ENCODE measurements at regions of chr1 and their contacts with region 1.

Region 1: GRCh38 chr1:52842643-52843309 is at the start of gene ZYG11A:
- DNase-seq: no peak
- ATAC-seq: peak; percentile 94
- H3K4me3 ChIP-seq: peak within 1 kb of the TSS; percentile 78
- H3K27ac ChIP-seq: peak within 1 kb of the TSS; percentile 73
- H3K4me1 ChIP-seq: no peaks in the 10 kb centered on the region
- H3K27me3 ChIP-seq: no peaks in the 10 kb centered on the region
- CTCF ChIP-seq: peak; percentile 17 to 55 (median 29); a peak in 3 of 6 replicates
- EP300 ChIP-seq: no peak
- POLR2A ChIP-seq: peak; percentile 55; the same call in 1 of the 2 replicates
- RAD21 ChIP-seq: peak; percentile 20; the same call in 1 of the 2 replicates
- polyA plus RNA-seq, gene ZYG11A: 0.22 to 0.26 TPM

Region 2: GRCh38 chr1:52210044-52210443 is 632.7 kb before region 1 on chr1:
- CTCF ChIA-PET with region 1: no interaction called
- POLR2A ChIA-PET with region 1: no interaction called
- RAD21 ChIA-PET with region 1: no interaction called
- SMC1A ChIA-PET with region 1: no interaction called
- in situ Hi-C with region 1: no loop called
- intact Hi-C with region 1: no loop called
- DNase-seq: no peak
- ATAC-seq: no peak
- H3K4me3 ChIP-seq: no peak overlapping the region
- H3K27ac ChIP-seq: no peak overlapping the region
- H3K4me1 ChIP-seq: no peaks in the 10 kb centered on the region
- H3K27me3 ChIP-seq: no peaks in the 10 kb centered on the region
- CTCF ChIP-seq: no peak
- EP300 ChIP-seq: no peak
- POLR2A ChIP-seq: no peak
- RAD21 ChIP-seq: no peak

Region 3: DNA sequence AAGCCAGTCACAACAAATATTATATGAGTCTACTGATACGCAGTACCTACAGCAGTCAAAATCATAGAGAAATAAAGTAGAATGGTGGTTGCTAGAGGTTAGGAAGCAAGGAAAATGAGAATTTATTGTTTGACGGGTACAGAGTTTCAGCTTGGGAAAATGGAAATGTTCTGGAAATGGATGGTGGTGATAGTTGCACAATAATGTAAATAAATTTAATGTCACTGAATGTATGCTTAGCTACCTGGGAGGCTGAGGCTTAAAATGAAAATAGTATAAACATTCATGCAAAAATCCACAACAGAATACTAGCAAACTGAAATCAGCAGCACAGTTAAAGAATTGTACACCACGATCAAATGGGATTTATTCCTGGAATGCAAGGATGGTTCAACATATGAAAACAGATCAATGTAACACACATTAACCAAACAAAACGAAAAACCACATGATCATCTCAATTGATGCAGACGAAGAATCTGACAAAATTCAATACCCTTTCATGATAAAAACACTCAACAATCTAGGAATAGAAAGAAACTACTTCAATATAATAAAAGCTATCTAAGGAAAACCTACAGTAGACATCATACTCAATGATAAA is 300.6 kb before region 1 on chr1:
- CTCF ChIA-PET with region 1: no interaction called
- POLR2A ChIA-PET with region 1: no interaction called
- RAD21 ChIA-PET with region 1: no interaction called
- SMC1A ChIA-PET with region 1: no interaction called
- in situ Hi-C with region 1: no loop called
- intact Hi-C with region 1: loop called (anchors 10 kb)
- DNase-seq: no peak
- ATAC-seq: no peak
- H3K4me3 ChIP-seq: no peak overlapping the region
- H3K27ac ChIP-seq: no peak overlapping the region
- H3K4me1 ChIP-seq: no peaks in the 10 kb centered on the region
- H3K27me3 ChIP-seq: no peaks in the 10 kb centered on the region
- CTCF ChIP-seq: no peak
- EP300 ChIP-seq: no peak
- POLR2A ChIP-seq: no peak
- RAD21 ChIP-seq: no peak

Region 4: DNA sequence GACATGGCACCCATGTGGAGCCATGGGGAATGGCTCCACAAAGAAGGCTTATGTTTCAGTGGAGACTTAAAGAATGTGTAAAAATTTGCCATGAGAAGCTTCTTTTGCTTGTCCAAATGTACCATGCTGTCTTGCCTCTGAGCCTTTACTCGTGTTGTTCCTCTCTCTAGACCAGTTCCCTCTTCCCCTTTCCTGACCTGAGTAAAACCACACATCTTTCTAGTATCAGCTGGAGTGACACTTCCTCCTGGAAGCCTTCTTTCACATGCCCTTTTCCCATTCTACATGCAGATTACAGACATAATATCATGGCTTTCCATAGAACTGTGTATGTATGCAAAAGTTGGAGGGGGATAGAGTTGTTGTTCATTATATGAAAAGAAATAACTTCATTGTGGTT is 254.2 kb before region 1 on chr1:
- CTCF ChIA-PET with region 1: no interaction called
- POLR2A ChIA-PET with region 1: no interaction called
- RAD21 ChIA-PET with region 1: no interaction called
- SMC1A ChIA-PET with region 1: no interaction called
- in situ Hi-C with region 1: no loop called
- intact Hi-C with region 1: no loop called
- DNase-seq: no peak
- ATAC-seq: no peak
- H3K4me3 ChIP-seq: no peak overlapping the region
- H3K27ac ChIP-seq: no peak overlapping the region
- H3K4me1 ChIP-seq: no peaks in the 10 kb centered on the region; the same call in 1 of the 2 replicates
- H3K27me3 ChIP-seq: no peaks in the 10 kb centered on the region
- CTCF ChIP-seq: no peak
- EP300 ChIP-seq: no peak
- POLR2A ChIP-seq: no peak
- RAD21 ChIP-seq: no peak

Region 5: DNA sequence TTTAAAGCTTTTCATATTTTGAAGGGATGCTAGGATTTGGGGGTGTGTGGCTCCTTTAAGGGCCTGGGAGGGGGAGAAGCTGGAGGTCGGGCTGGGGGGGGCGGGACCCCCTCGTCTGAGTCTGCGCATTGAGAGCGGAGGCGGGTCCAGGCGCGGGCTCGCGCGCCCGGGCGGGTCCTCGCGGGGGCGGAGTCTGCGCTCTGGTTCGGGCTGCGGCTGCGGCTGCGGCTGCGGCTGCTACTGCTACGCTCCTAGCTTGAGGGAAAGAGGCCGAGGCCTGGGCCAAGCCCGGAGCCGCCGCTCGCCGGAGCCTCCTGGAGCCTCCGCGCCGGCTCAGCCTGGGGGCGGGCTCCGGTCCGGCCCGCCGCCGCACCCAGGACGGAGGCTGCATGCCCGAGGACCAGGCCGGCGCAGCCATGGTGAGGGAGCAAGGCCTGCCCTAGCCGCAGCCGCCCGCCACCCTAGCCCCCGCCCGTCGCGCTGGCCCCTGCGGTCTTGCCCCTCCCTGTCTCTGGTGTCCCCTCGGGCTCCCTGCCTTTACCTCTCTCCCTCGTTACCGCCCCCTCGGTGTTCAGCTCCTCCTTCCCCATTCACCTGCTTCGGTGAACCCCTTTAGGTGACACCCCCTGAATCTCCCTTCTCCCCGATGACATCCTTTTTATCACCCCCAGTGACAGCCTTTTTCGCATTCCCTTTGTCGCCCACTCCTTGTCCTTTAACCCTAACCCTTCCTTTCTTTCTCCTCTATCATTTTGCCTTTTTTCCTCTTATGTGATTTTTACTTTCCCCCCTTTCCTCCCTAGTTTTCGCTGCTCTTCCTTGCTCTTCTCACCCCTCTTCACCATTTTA is 116.3 kb before region 1 on chr1 and contains the start of gene ZYG11B:
- CTCF ChIA-PET with region 1: interaction called, 3 read pairs
- POLR2A ChIA-PET with region 1: interaction called, 4 read pairs
- RAD21 ChIA-PET with region 1: interaction called, 12 read pairs
- SMC1A ChIA-PET with region 1: no interaction called
- in situ Hi-C with region 1: no loop called
- intact Hi-C with region 1: no loop called
- DNase-seq: peak; percentile 24
- ATAC-seq: peak; percentile 97
- H3K4me3 ChIP-seq: peak within 1 kb of the TSS; percentile 94
- H3K27ac ChIP-seq: peak within 1 kb of the TSS; percentile 51
- H3K4me1 ChIP-seq: no peaks in the 10 kb centered on the region; the same call in 1 of the 2 replicates
- H3K27me3 ChIP-seq: no peaks in the 10 kb centered on the region
- CTCF ChIP-seq: no peak
- EP300 ChIP-seq: no peak
- POLR2A ChIP-seq: peak; percentile 69
- RAD21 ChIP-seq: no peak
- polyA plus RNA-seq, gene ZYG11B: 1.8 to 2.6 TPM

Region 6: GRCh38 chr1:52792036-52792435 is 50.7 kb before region 1 on chr1:
- CTCF ChIA-PET with region 1: no interaction called
- POLR2A ChIA-PET with region 1: no interaction called
- RAD21 ChIA-PET with region 1: no interaction called
- SMC1A ChIA-PET with region 1: no interaction called
- in situ Hi-C with region 1: no loop called
- intact Hi-C with region 1: no loop called
- DNase-seq: no peak
- ATAC-seq: no peak
- H3K4me3 ChIP-seq: no peak overlapping the region
- H3K27ac ChIP-seq: no peak overlapping the region
- H3K4me1 ChIP-seq: no peaks in the 10 kb centered on the region
- H3K27me3 ChIP-seq: no peaks in the 10 kb centered on the region
- CTCF ChIP-seq: no peak
- EP300 ChIP-seq: no peak
- POLR2A ChIP-seq: no peak
- RAD21 ChIP-seq: no peak

Region 7: GRCh38 chr1:52867087-52867863 is 24.5 kb after region 1 on chr1:
- CTCF ChIA-PET with region 1: no interaction called
- POLR2A ChIA-PET with region 1: interaction called, 8 read pairs
- RAD21 ChIA-PET with region 1: interaction called, 3 read pairs
- SMC1A ChIA-PET with region 1: interaction called, 10 read pairs
- in situ Hi-C with region 1: no loop called
- intact Hi-C with region 1: no loop called
- DNase-seq: peak; percentile 67
- ATAC-seq: peak; percentile 99
- H3K4me3 ChIP-seq: no peak overlapping the region
- H3K27ac ChIP-seq: peak overlapping the region; percentile 58
- H3K4me1 ChIP-seq: peaks cover 8% of the 10 kb centered on the region
- H3K27me3 ChIP-seq: no peaks in the 10 kb centered on the region
- CTCF ChIP-seq: no peak
- EP300 ChIP-seq: 0 out of 4 replicates have a peak, but pooled peaks of 1 of the 2 experiments have one; percentile 40
- POLR2A ChIP-seq: peak; percentile 35; the same call in 1 of the 2 replicates
- RAD21 ChIP-seq: no peak

Region 8: GRCh38 chr1:52920791-52921291 is 78.1 kb after region 1 on chr1:
- CTCF ChIA-PET with region 1: interaction called, 8 read pairs
- POLR2A ChIA-PET with region 1: interaction called, 7 read pairs
- RAD21 ChIA-PET with region 1: interaction called, 10 read pairs
- SMC1A ChIA-PET with region 1: no interaction called
- in situ Hi-C with region 1: no loop called
- intact Hi-C with region 1: loop called (anchors 2 kb)
- DNase-seq: no peak
- ATAC-seq: peak; percentile 3; the same call in 2 of the 3 replicates
- H3K4me3 ChIP-seq: peak overlapping the region; percentile 52
- H3K27ac ChIP-seq: no peak overlapping the region
- H3K4me1 ChIP-seq: no peaks in the 10 kb centered on the region
- H3K27me3 ChIP-seq: no peaks in the 10 kb centered on the region
- CTCF ChIP-seq: no peak
- EP300 ChIP-seq: no peak
- POLR2A ChIP-seq: no peak
- RAD21 ChIP-seq: no peak

Region 9: DNA sequence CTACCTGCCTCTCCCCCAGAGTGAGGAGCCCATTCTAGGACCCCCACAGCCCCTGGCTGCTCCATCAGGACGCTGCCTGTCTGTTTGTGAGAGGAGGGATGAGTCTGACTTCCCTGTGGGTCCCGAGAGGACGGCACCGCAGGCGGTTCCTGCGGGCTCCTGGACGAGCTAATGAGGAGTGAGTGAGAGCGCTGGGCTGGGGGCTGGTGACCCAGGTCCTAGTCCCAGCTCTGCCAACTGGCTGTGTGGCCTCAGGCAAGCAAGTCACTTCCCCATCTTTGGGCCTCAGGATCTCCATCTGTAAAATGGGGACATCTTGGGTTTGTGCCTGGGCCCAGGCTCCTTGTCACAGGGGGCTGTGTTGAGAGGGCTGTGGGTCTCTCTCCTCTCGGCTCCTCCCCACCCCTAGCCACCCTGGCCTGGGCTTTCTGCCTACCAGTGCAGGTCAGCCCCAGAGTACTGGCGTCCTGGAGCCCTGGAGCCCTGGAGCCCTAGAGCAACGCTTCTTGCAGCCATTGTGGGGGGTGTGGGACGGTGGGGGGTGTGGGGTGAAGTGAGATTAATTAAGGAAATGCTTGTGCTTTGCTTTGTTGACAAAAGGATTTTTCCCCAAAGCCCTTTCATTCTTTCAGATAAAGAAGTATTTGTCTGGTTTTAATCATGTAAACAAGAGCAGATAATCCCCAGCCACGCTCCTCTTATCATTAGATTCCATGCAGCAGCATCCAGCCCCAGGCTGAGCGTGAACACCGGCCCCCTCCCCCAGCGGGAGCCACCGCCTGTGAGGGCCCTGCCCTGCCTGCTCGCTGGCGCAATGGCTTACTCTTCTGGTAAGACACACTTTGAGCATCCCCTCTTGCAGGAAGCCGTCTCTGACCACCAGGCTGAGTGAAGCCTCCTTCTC is 272.9 kb after region 1 on chr1:
- CTCF ChIA-PET with region 1: no interaction called
- POLR2A ChIA-PET with region 1: no interaction called
- RAD21 ChIA-PET with region 1: no interaction called
- SMC1A ChIA-PET with region 1: no interaction called
- in situ Hi-C with region 1: no loop called
- intact Hi-C with region 1: no loop called
- DNase-seq: no peak
- ATAC-seq: no peak
- H3K4me3 ChIP-seq: no peak overlapping the region
- H3K27ac ChIP-seq: no peak overlapping the region
- H3K4me1 ChIP-seq: no peaks in the 10 kb centered on the region
- H3K27me3 ChIP-seq: no peaks in the 10 kb centered on the region; a peak in 1 of 4 replicates
- CTCF ChIP-seq: no peak
- EP300 ChIP-seq: no peak
- POLR2A ChIP-seq: no peak
- RAD21 ChIP-seq: no peak

Measured in GM12878 (cell line).